ENCODE measurements at regions of chr5 and their contacts with region 1.

Region 1: DNA sequence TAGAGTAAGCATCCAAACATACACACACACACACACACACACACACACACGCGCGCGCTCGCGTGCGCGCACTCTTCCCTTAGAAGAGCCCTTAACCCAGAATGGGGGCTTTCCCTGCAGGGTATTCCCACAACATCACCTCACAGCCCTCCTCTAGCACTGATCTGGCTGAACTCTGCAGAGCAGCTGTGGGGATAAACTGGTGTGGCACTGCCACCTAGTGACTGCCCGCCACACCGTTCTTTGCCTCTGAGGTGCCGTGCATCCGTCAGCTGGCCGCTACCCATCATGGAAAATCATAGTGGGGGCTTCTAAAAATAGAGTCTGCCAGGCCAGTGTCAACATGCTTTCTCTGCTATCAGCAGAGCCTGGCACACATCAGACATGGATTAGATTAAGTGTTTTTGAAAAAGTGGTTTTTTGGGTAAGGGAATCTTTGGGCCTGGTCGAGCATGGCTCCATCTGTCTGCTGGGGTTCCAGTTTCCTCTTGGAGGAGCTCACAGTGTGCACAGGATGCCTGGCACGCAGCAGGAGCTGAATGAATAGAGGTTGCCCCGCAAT is 88.1 kb downstream of the KCNN2 start:
- DNase-seq: peak; percentile 57
- H3K4me3 Mint-ChIP-seq: no peak overlapping the region
- H3K27ac Mint-ChIP-seq: no peak overlapping the region
- H3K4me1 Mint-ChIP-seq: no peaks in the 10 kb centered on the region
- H3K27me3 Mint-ChIP-seq: peaks cover 84% of the 10 kb centered on the region
- CTCF ChIP-seq: peak; percentile 85

Region 2: GRCh38 chr5:113606298-113607134 is 843.4 kb before region 1 on chr5:
- CTCF ChIA-PET with region 1: interaction called, 57 read pairs
- POLR2A ChIA-PET with region 1: no interaction called
- intact Hi-C with region 1: no loop called
- DNase-seq: peak; percentile 70
- H3K4me3 Mint-ChIP-seq: no peak overlapping the region
- H3K27ac Mint-ChIP-seq: no peak overlapping the region
- H3K4me1 Mint-ChIP-seq: no peaks in the 10 kb centered on the region
- H3K27me3 Mint-ChIP-seq: no peaks in the 10 kb centered on the region
- CTCF ChIP-seq: peak; percentile 91

Region 3: DNA sequence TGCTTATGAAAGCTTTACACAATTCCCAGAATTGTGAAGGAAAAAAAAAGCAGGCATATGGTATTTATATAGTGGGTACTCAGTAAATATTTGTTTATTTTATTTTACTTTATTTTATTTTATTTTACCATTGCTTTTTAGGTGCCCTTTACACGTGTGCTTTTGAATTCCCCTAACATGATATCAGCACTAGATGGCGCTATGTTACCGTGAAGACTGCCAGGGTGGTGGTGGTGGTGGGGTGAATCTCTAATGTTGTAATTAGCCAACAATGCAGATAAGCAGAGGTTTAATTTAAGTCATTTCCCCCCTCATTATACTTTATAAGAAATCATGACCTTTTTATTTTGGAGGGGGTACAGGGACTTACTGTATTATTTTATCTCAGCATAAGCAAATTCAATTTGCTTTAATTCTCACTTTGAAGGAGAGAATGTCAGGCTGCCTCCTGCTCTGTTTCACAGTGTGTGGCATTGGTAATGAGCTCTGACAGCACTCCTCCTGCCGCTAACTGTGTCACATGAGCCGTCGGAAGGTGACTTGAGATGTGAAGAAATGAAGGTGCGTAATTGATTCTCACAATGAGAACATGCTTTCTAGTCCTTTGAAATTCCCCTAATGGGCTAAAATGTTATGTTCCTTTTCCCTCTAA is 770.9 kb before region 1 on chr5:
- CTCF ChIA-PET with region 1: interaction called, 151 read pairs
- POLR2A ChIA-PET with region 1: no interaction called
- intact Hi-C with region 1: loop called (anchors 1 kb)
- DNase-seq: peak; percentile 70
- H3K4me3 Mint-ChIP-seq: no peak overlapping the region
- H3K27ac Mint-ChIP-seq: no peak overlapping the region
- H3K4me1 Mint-ChIP-seq: no peaks in the 10 kb centered on the region
- H3K27me3 Mint-ChIP-seq: no peaks in the 10 kb centered on the region
- CTCF ChIP-seq: peak; percentile 71

Region 4: DNA sequence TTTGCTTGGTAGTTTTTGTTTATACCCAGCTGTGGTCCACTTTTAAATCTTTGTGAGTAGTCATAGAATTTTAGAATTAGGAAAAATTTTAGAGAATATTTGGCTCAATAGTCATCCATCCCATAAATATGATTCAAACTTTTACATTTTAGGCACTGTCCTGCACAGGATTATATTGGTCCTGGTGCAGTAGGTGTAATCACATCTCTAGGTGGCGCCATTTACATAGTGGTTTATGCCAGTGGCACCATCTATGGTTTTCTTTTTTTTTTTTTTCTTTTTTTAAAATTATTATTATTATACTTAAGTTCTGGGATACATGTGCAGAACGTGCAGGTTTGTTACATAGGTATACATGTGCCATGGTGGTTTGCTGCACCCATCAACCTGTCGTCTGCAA is 348.8 kb before region 1 on chr5:
- CTCF ChIA-PET with region 1: interaction called, 5 read pairs
- POLR2A ChIA-PET with region 1: no interaction called
- intact Hi-C with region 1: loop called (anchors 1 kb)
- DNase-seq: peak; percentile 54
- H3K4me3 Mint-ChIP-seq: no peak overlapping the region
- H3K27ac Mint-ChIP-seq: no peak overlapping the region
- H3K4me1 Mint-ChIP-seq: no peaks in the 10 kb centered on the region
- H3K27me3 Mint-ChIP-seq: peaks cover 60% of the 10 kb centered on the region
- CTCF ChIP-seq: peak; percentile 52

Region 5: GRCh38 chr5:114467729-114468128 is 17.8 kb after region 1 on chr5:
- CTCF ChIA-PET with region 1: interaction called, 10 read pairs
- POLR2A ChIA-PET with region 1: no interaction called
- intact Hi-C with region 1: no loop called
- DNase-seq: no peak
- H3K4me3 Mint-ChIP-seq: no peak overlapping the region
- H3K27ac Mint-ChIP-seq: no peak overlapping the region
- H3K4me1 Mint-ChIP-seq: no peaks in the 10 kb centered on the region
- H3K27me3 Mint-ChIP-seq: peaks cover 15% of the 10 kb centered on the region
- CTCF ChIP-seq: no peak

Region 6: GRCh38 chr5:115069087-115069968 is 619.4 kb after region 1 on chr5:
- CTCF ChIA-PET with region 1: interaction called, 8 read pairs
- POLR2A ChIA-PET with region 1: no interaction called
- intact Hi-C with region 1: loop called (anchors 2 kb)
- DNase-seq: peak; percentile 70
- H3K4me3 Mint-ChIP-seq: no peak overlapping the region
- H3K27ac Mint-ChIP-seq: no peak overlapping the region
- H3K4me1 Mint-ChIP-seq: no peaks in the 10 kb centered on the region
- H3K27me3 Mint-ChIP-seq: peaks cover 36% of the 10 kb centered on the region
- CTCF ChIP-seq: peak; percentile 68